Activated B cell treated with CpG ODN at 0.5 μM for 24 hours (primary cell): ENCODE measurements at regions of chr12 and their contacts with region 1.

Region 1: DNA sequence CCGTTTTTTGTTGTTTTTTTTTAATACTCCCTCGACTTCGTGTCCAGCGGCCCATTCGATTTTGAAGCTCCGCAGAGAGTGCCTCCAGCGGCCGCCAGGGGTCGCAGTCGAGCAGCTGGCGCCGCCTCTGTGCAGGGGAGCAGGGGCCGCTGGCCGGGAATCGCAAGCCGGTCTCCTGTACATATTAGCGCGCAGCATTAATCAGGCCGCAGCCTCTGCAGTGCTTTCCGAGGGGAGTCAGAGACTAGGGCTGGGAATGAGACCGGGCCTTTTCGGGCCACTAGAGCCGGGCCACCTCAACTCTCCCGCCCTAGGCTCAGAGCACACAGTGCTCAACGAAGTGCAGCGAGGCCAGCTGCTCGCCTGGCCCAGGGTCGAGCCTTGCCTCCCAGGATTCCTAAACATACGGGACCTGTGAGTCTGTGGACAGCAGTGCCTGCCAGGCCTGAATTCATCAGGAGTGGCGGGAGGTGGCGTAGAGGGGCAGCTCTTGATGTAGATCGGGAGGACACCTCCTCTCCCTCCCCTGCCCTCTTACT is 81.8 kb downstream of the EMP1 start:
- DNase-seq: peak; percentile 58
- ATAC-seq: peak; percentile 69
- H3K4me3 Mint-ChIP-seq: peak overlapping the region; percentile 17
- H3K27ac Mint-ChIP-seq: no peak overlapping the region
- H3K4me1 Mint-ChIP-seq: peaks cover 4% of the 10 kb centered on the region
- H3K27me3 Mint-ChIP-seq: peaks cover 27% of the 10 kb centered on the region
- CTCF ChIP-seq: peak; percentile 49

Region 2: GRCh38 chr12:13661005-13661887 is 382.9 kb after region 1 on chr12:
- CTCF ChIA-PET with region 1: interaction called, 9 read pairs
- POLR2A ChIA-PET with region 1: no interaction called
- intact Hi-C with region 1: loop called (anchors 1 kb)
- DNase-seq: no peak
- ATAC-seq: peak; percentile 58
- H3K4me3 Mint-ChIP-seq: no peak overlapping the region
- H3K27ac Mint-ChIP-seq: no peak overlapping the region
- H3K4me1 Mint-ChIP-seq: no peaks in the 10 kb centered on the region
- H3K27me3 Mint-ChIP-seq: no peaks in the 10 kb centered on the region
- CTCF ChIP-seq: peak; percentile 68

Region 3: GRCh38 chr12:13941258-13942249 is 663.2 kb after region 1 on chr12:
- CTCF ChIA-PET with region 1: no interaction called
- POLR2A ChIA-PET with region 1: no interaction called
- intact Hi-C with region 1: loop called (anchors 5 kb)
- DNase-seq: no peak
- ATAC-seq: peak; percentile 31
- H3K4me3 Mint-ChIP-seq: no peak overlapping the region
- H3K27ac Mint-ChIP-seq: no peak overlapping the region
- H3K4me1 Mint-ChIP-seq: peaks cover 7% of the 10 kb centered on the region
- H3K27me3 Mint-ChIP-seq: peaks cover 20% of the 10 kb centered on the region
- CTCF ChIP-seq: no peak